HEK293 (cell line): ENCODE measurements at regions of chr12 and their contacts with region 1.

Region 1: GRCh38 chr12:53508534-53509199 is 1.4 kb upstream of the NPFF start:
- H3K4me3 ChIP-seq: no peak overlapping the region
- H3K27ac ChIP-seq: no peak overlapping the region
- H3K4me1 ChIP-seq: no peaks in the 10 kb centered on the region
- CTCF ChIP-seq: peak; percentile 91

Region 2: GRCh38 chr12:53530920-53531319 is 22.3 kb after region 1 on chr12:
- CTCF ChIA-PET with region 1: interaction called, 10 read pairs
- POLR2A ChIA-PET with region 1: no interaction called
- H3K4me3 ChIP-seq: no peak overlapping the region
- H3K27ac ChIP-seq: no peak overlapping the region
- H3K4me1 ChIP-seq: no peaks in the 10 kb centered on the region
- CTCF ChIP-seq: no peak

Region 3: GRCh38 chr12:53551889-53552291 is 43.2 kb after region 1 on chr12:
- CTCF ChIA-PET with region 1: no interaction called
- POLR2A ChIA-PET with region 1: no interaction called
- H3K4me3 ChIP-seq: no peak overlapping the region
- H3K27ac ChIP-seq: no peak overlapping the region
- H3K4me1 ChIP-seq: peaks cover 8% of the 10 kb centered on the region
- CTCF ChIP-seq: no peak

Region 4: GRCh38 chr12:53820516-53821306 is 312.0 kb after region 1 on chr12:
- CTCF ChIA-PET with region 1: no interaction called
- POLR2A ChIA-PET with region 1: no interaction called
- H3K4me3 ChIP-seq: no peak overlapping the region
- H3K27ac ChIP-seq: no peak overlapping the region
- H3K4me1 ChIP-seq: 0 out of 2 replicates have a peak, but pooled peaks cover 2% of the 10 kb centered on the region
- CTCF ChIP-seq: no peak